HEK293T (cell line): ENCODE measurements at regions of chr1 and their contacts with region 1.

Region 1: DNA sequence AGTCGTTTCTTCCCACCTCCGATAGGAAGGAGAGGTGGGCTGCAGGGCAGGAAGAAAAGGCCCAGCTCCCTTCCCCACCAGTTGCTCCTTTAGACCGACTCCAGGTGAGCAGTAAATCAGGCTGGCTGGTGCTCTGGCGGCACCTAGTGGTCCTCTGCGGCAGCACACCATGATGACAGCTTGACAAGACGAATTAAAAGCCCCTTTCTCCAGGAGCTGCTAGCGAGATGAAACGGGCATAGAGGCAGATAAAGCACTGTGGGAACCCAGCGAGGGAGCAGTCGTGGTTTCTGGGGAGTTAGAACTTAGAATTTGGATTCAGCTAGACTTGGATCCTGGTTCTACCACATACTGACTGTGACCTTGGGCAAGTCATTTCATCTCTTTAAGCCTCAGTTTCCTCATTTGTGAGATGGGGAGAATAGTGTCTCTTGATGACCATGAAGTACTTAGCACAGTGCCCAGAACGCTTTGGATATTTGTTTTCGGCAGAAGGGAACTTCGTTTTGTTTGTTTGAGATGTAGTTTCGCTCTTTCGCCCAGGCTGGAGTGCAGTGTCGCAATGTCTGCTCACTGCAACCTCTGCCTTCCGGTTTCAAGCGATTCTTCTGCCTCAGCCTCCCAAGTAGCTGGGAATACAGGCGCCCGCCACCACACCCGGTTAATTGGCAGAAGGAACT is 21.8 kb upstream of the COL9A2 start:
- DNase-seq: peak; percentile 83

Region 2: GRCh38 chr1:40153073-40153770 is 185.7 kb before region 1 on chr1:
- CTCF ChIA-PET with region 1: interaction called, 40 read pairs
- POLR2A ChIA-PET with region 1: no interaction called
- DNase-seq: peak; percentile 39

Region 3: DNA sequence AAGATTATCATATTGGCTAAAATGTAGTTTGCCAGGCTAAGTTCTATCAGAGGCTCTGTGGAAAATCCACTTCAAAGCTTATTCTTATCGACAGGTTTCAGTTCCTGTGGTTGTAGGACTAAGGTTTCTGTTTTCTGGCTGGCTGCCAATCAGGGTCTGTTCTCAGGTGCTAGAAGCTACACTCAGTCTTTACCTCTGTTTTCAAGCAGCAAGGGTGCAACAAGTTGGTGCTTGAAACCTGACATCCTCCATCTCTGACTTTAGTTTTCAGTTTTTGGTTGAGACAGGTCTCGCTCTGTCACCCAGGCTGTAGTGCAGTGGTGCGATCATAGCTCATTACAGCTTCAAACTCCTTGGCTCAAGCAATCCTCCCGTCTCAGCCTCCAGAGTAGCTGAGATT is 106.4 kb before region 1 on chr1:
- CTCF ChIA-PET with region 1: no interaction called
- POLR2A ChIA-PET with region 1: no interaction called
- DNase-seq: no peak

Region 4: DNA sequence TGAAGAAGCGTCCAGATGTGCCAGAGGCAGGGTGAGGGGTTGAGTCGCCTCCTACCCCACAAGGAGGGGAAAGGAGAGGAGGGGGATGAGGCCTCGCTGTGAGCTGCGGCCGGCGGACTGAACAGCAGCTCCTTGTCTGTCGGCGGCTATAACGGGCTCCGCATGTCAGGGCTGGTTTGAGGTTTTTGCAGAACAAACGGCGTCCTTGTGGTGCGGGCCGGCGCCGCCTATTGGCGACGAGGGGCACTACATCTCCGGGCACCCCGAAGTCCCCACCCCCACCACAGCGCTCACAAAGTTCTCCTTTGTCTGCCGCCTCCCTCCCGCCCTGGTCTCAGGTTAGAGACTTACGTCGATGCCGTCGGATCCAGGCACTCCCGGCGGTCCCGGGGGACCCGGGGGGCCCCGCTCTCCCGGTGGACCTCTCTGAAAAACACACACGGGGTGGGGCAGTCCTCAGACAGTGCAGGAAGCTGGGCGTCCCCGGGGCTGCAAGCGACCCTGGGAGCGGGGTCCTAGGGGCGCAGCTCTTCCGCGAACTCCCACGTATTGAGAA is 23.6 kb before region 1 on chr1:
- CTCF ChIA-PET with region 1: interaction called, 23 read pairs
- POLR2A ChIA-PET with region 1: interaction called, 5 read pairs
- DNase-seq: peak; percentile 90

Region 5: GRCh38 chr1:40373338-40374283 is 34.7 kb after region 1 on chr1 and contains the start of gene SMAP2:
- CTCF ChIA-PET with region 1: interaction called, 15 read pairs
- POLR2A ChIA-PET with region 1: no interaction called
- DNase-seq: peak; percentile 99